AG04450 (cell line): ENCODE measurements at regions of chr4 and their contacts with region 1.

Region 1: DNA sequence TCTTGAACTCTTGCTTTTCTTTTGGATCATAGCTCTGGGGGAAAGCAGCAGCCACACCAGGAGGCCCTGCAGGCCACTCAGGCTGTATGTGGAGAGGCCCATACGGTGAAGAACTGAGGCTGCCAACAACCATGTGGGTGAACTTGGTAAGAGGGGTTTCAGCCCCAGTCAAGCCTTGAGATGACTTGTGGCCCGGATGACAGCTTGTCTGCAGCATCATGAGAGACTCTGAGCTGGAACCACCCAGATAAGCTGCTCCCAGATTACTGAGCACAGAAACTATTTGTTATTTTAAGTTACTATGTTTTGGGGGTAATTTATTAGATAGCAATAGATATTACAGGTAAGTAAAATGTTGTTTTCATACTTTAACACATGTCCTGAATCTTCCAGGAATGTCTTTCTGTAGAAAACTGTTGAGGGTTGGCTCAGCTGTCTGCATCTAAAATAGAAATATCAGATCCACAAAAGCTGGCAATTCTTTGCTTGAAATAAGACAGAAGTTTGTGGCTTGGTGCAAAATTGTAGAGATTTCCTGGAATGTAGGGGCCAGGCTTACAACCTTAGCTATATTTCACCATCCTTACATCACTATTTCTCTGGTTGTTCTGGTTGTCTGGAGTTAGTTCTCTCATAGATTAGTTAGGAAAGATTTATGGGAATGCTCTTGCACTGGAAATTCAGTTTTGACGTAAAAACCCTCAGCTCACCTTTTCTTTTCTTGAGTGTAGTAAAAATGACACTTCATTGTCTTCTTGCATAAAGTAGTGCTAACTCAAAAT is 272.1 kb downstream of the RAPGEF2 start:
- DNase-seq: peak; percentile 16
- H3K4me3 ChIP-seq: no peak overlapping the region
- H3K27ac ChIP-seq: no peak overlapping the region
- H3K27me3 ChIP-seq: no peaks in the 10 kb centered on the region
- CTCF ChIP-seq: no peak

Region 2: GRCh38 chr4:158722917-158723793 is 651.8 kb before region 1 on chr4 and contains the start of gene PPID:
- CTCF ChIA-PET with region 1: no interaction called
- POLR2A ChIA-PET with region 1: interaction called, 14 read pairs
- DNase-seq: peak; percentile 21
- H3K4me3 ChIP-seq: peak within 1 kb of the TSS; percentile 89
- H3K27ac ChIP-seq: peak within 1 kb of the TSS; percentile 68
- H3K27me3 ChIP-seq: no peaks in the 10 kb centered on the region
- CTCF ChIP-seq: no peak
- polyA plus RNA-seq, gene PPID: 19.6 and 22.9 TPM in 2 replicates

Region 3: GRCh38 chr4:159334461-159334860 is 40.5 kb before region 1 on chr4:
- CTCF ChIA-PET with region 1: no interaction called
- POLR2A ChIA-PET with region 1: no interaction called
- DNase-seq: no peak
- H3K4me3 ChIP-seq: no peak overlapping the region
- H3K27ac ChIP-seq: no peak overlapping the region
- H3K27me3 ChIP-seq: no peaks in the 10 kb centered on the region
- CTCF ChIP-seq: no peak